PC-9 (cell line): ENCODE measurements at regions of chr1 and their contacts with region 1.

Region 1: DNA sequence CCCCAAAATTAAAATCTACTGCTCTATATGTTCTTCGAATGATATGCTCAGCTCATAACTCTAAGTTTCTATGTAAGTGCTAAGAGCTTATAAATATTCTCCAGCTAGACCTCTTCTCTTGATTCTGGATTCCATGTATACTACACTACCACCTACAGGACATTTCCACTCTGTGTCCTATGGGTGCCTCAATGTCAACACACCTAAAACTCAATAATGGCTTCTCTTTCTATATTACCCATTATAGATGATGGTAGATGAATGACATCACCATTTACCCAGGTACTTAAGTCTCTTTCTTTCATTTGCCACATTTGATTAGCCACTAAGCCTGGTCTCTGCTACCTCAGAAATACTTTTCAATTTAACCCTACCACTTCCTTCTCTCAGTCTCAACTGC is 41.3 kb downstream of the TBX19 start:
- DNase-seq: peak in 1 of 2 experiments; percentile 58
- H3K4me3 ChIP-seq: no peak overlapping the region
- H3K27ac ChIP-seq: no peak overlapping the region
- H3K4me1 ChIP-seq: peaks cover 13% of the 10 kb centered on the region
- H3K27me3 ChIP-seq: no peaks in the 10 kb centered on the region
- CTCF ChIP-seq: peak; percentile 60

Region 2: DNA sequence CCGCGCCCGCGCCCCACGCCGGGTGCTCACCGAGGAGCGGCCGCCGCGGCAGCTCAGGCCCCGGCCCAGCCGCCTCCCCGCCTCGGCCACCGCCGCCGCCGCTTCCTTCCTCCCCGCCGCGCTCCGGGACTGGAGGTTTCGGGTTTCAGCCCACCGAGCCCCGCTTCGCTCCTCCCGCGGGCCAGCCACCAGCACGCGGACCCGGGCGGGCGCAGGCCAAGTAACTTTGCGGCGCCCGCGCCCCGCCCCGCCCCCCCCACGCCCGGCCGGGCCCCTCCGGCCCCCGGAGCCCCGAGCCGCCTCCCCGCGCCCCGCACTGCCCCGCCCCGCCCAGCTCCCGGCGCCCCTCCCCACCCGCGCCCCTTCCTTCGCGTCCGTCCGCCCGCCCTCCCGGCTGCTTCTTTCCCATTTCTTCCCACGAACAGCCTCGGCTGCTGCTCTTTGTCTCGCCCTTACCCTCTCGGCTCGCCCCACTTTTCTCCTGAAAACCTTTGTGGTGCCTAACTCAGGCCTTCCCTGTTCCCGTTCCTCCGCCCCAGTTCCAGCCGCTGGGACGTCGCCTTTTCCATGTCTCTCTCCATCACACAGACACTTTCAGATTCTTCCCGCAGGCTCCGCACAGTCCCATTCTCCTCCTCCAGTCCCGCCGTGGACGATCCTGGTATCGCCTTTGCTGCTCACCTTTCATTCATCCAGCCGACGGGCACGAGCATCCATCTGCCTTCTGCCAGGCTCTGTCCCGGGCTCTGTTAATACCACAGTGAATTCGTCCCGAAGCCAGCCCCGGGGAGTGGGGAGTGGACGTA is 185.0 kb before region 1 on chr1 and contains the start of gene GPR161:
- CTCF ChIA-PET with region 1: no interaction called
- POLR2A ChIA-PET with region 1: no interaction called
- intact Hi-C with region 1: loop called (anchors 5 kb)
- DNase-seq: peak in 1 of 2 experiments; percentile 43
- H3K4me3 ChIP-seq: peak within 1 kb of the TSS; percentile 78
- H3K27ac ChIP-seq: no peak within 1 kb of the TSS
- H3K4me1 ChIP-seq: peaks cover 20% of the 10 kb centered on the region
- H3K27me3 ChIP-seq: no peaks in the 10 kb centered on the region
- CTCF ChIP-seq: no peak
- total RNA-seq, gene GPR161: 6.0 and 6.7 TPM in 2 replicates

Region 3: GRCh38 chr1:168163670-168164069 is 158.3 kb before region 1 on chr1:
- CTCF ChIA-PET with region 1: interaction called, 20 read pairs
- POLR2A ChIA-PET with region 1: no interaction called
- intact Hi-C with region 1: no loop called
- DNase-seq: no peak
- H3K4me3 ChIP-seq: no peak overlapping the region
- H3K27ac ChIP-seq: no peak overlapping the region
- H3K4me1 ChIP-seq: no peaks in the 10 kb centered on the region
- H3K27me3 ChIP-seq: no peaks in the 10 kb centered on the region
- CTCF ChIP-seq: no peak

Region 4: DNA sequence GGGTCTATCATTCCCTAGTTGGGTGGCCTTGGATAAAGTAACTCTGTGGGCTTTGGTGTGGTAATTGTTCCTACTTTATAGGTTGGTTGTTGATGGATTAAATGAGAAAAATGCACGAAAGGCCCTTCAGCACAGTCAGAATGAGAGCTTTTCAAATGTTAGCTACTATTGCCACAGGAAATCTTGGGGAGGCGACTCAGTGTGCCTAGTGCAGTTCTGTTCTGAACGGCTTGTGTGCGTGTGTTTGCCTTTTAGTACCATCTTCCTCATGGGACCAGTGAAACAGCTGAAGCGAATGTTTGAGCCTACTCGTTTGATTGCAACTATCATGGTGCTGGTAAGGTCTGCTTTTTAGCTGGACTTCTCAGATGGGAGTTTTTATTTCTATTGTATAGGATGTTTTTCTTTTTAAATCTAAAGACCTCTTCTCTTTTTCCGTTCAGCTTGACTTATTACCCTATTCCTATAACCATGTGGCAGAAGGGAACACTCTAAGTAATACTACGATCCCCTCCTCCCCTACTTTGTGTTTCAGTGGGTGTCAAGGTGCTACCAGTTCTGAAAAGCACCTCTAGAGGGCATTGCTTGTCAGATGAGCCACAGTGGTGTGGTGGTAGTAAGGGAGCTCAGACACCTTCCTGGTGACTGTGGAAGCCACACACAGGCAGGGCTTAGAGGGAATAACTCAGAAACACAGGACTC is 86.9 kb before region 1 on chr1:
- CTCF ChIA-PET with region 1: interaction called, 30 read pairs
- POLR2A ChIA-PET with region 1: no interaction called
- intact Hi-C with region 1: loop called (anchors 1 kb)
- DNase-seq: no peak
- H3K4me3 ChIP-seq: no peak overlapping the region
- H3K27ac ChIP-seq: no peak overlapping the region
- H3K4me1 ChIP-seq: peaks cover 17% of the 10 kb centered on the region
- H3K27me3 ChIP-seq: no peaks in the 10 kb centered on the region
- CTCF ChIP-seq: peak; percentile 69